ENCODE measurements at regions of chr4 and their contacts with region 1.

Region 1: DNA sequence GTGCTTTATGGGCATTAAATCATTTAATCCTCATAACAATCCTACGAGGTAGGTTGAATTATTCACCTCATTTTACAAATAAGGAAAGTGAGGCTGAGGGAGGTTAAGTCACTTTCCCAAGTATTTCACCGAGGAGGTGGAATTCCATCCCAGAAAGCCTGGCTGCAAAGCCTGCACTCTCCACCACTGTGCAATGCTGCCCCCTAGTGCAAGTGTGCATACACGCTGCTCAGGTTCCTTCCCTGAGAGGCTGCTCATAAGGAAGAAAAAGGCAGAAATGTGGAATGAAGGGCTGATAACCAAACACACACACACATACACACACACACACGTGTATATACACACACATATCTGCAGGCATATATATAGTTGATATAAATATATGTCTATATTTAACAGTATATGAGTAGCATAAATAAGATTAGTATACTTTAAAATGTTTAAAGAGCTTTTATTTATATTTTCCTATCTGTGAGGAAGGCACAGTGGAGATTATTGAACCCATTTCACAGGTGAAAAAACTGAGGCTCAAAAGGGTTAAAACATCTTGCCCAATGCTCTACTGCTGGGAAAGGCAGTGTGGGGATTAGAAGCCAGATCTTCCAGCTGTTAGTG is 714.5 kb upstream of the TENM3 start:
- DNase-seq: peak; percentile 8
- ATAC-seq: peak; percentile 86
- H3K4me3 ChIP-seq: no peak overlapping the region
- H3K27ac ChIP-seq: no peak overlapping the region
- H3K4me1 ChIP-seq: no peaks in the 10 kb centered on the region
- H3K27me3 ChIP-seq: no peaks in the 10 kb centered on the region
- CTCF ChIP-seq: peak; percentile 84 to 90 (median 86)
- EP300 ChIP-seq: no peak
- POLR2A ChIP-seq: no peak
- RAD21 ChIP-seq: peak; percentile 92

Region 2: DNA sequence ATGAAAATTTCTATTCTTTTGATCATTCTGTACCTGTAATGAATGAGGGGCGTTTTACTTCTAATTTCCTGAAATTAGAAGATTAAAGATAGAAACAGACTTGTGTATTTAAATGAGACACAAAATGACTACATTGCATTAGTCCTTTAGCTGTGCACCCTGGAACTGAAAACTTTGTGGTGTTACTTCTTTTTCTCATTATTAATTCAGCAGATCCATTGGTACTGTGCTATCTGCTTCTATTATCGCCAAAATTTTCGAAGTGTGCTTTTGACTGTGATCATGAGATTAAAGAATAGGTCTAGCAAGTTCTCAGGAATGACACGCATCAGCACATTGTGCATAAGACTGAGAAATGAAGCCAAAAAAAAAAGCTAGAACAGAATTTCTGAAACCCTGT is 1224.4 kb before region 1 on chr4:
- CTCF ChIA-PET with region 1: no interaction called
- POLR2A ChIA-PET with region 1: no interaction called
- RAD21 ChIA-PET with region 1: no interaction called
- SMC1A ChIA-PET with region 1: no interaction called
- in situ Hi-C with region 1: no loop called
- intact Hi-C with region 1: no loop called
- DNase-seq: no peak
- ATAC-seq: 0 out of 3 replicates have a peak, but pooled peaks have one; percentile 19
- H3K4me3 ChIP-seq: no peak overlapping the region
- H3K27ac ChIP-seq: no peak overlapping the region
- H3K4me1 ChIP-seq: no peaks in the 10 kb centered on the region
- H3K27me3 ChIP-seq: no peaks in the 10 kb centered on the region
- CTCF ChIP-seq: no peak
- EP300 ChIP-seq: no peak
- POLR2A ChIP-seq: no peak
- RAD21 ChIP-seq: no peak

Region 3: DNA sequence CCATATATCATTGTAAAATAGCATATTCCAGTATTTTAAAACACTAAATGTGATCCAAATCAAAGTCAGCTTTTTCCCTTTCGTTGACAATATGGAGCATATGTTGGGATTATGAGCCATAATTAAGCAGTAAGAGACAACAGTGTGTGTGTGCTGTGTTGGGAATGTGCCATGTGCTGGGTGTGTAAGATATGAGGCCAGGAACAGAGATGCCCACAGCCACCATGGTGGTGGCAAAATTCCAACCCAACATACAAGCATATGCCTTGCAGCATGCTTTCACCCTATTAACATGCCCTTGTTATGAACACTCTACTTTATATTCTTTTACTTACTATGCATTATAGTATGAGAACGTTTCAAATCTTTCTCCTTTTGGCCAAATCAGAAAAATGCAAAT is 845.9 kb before region 1 on chr4:
- CTCF ChIA-PET with region 1: no interaction called
- POLR2A ChIA-PET with region 1: no interaction called
- RAD21 ChIA-PET with region 1: no interaction called
- SMC1A ChIA-PET with region 1: no interaction called
- in situ Hi-C with region 1: no loop called
- intact Hi-C with region 1: no loop called
- DNase-seq: no peak
- ATAC-seq: no peak
- H3K4me3 ChIP-seq: no peak overlapping the region
- H3K27ac ChIP-seq: no peak overlapping the region
- H3K4me1 ChIP-seq: no peaks in the 10 kb centered on the region
- H3K27me3 ChIP-seq: no peaks in the 10 kb centered on the region
- CTCF ChIP-seq: no peak
- EP300 ChIP-seq: no peak
- POLR2A ChIP-seq: no peak
- RAD21 ChIP-seq: no peak

Region 4: DNA sequence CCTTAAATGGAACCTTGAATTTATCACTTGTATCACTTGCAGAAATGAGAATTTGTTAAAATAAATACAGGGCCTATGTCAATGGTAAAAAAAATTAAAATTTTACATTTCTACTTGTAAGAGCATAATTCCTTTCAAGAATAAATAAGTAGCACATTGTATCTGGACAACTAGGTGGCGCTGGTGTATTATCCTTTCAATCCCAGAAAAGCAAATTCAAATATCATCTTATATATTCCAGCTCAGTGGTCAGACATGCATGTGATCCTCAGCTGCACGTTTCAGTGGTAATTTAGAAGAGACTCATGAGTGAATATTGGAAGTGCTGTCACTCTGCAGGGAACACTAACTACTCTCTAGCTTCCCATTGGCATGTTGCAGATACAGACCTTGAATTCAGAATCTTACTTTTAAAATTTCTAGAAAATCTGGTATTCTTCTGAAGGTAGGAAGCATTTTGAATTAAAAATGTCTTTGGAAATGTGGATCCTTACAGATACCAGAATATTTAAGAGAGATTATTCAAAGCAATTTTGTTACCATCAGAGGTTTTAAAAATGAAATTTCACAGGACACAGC is 700.1 kb before region 1 on chr4:
- CTCF ChIA-PET with region 1: interaction called, 21 read pairs
- POLR2A ChIA-PET with region 1: no interaction called
- RAD21 ChIA-PET with region 1: interaction called, 3 read pairs
- SMC1A ChIA-PET with region 1: interaction called, 4 read pairs
- in situ Hi-C with region 1: no loop called
- intact Hi-C with region 1: loop called (anchors 1 kb)
- DNase-seq: no peak
- ATAC-seq: peak; percentile 51; the same call in 2 of the 3 replicates
- H3K4me3 ChIP-seq: no peak overlapping the region
- H3K27ac ChIP-seq: no peak overlapping the region
- H3K4me1 ChIP-seq: peaks cover 4% of the 10 kb centered on the region; the same call in 1 of the 2 replicates
- H3K27me3 ChIP-seq: no peaks in the 10 kb centered on the region
- CTCF ChIP-seq: peak; percentile 56 to 59 (median 58)
- EP300 ChIP-seq: no peak
- POLR2A ChIP-seq: no peak
- RAD21 ChIP-seq: peak; percentile 71

Region 5: DNA sequence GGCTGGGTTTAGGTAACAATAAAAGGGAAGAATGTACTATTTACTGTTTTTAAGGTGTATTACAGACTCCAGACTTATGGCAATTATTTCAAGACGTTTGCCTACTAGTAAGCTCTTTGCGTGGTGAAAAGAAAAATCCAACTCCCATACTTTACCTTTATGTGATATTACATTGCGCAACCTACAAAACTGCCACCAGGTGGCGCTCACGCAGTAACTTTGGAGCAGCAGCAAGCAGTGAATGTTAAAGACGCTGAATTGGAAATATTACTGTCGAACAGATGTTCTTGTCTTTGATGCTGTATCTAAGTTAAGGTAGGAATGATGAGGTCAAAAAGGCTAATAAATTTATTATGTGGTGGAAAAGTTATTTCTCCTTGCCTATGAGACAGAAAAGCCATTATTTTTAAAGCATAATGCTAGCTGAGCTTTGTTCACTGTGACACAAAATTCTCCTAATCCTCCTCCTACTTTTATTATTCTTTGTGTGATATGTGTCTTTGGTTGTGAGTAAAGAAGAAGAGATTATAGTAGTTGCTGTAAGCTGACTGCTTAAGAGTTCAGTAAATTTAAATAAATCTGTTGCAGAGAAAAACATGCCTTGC is 385.3 kb before region 1 on chr4:
- CTCF ChIA-PET with region 1: interaction called, 50 read pairs
- POLR2A ChIA-PET with region 1: no interaction called
- RAD21 ChIA-PET with region 1: interaction called, 22 read pairs
- SMC1A ChIA-PET with region 1: interaction called, 13 read pairs
- in situ Hi-C with region 1: loop called (anchors 5 kb)
- intact Hi-C with region 1: loop called (anchors 1 kb)
- DNase-seq: peak; percentile 5
- ATAC-seq: peak; percentile 90
- H3K4me3 ChIP-seq: no peak overlapping the region
- H3K27ac ChIP-seq: no peak overlapping the region
- H3K4me1 ChIP-seq: no peaks in the 10 kb centered on the region
- H3K27me3 ChIP-seq: no peaks in the 10 kb centered on the region; a peak in 1 of 4 replicates
- CTCF ChIP-seq: peak; percentile 81 to 84 (median 83)
- EP300 ChIP-seq: no peak
- POLR2A ChIP-seq: no peak
- RAD21 ChIP-seq: peak; percentile 95

Region 6: GRCh38 chr4:181301735-181302710 is 226.7 kb before region 1 on chr4:
- CTCF ChIA-PET with region 1: interaction called, 77 read pairs
- POLR2A ChIA-PET with region 1: no interaction called
- RAD21 ChIA-PET with region 1: interaction called, 8 read pairs
- SMC1A ChIA-PET with region 1: interaction called, 36 read pairs
- in situ Hi-C with region 1: loop called (anchors 5 kb)
- intact Hi-C with region 1: loop called (anchors 1 kb)
- DNase-seq: no peak
- ATAC-seq: peak; percentile 96
- H3K4me3 ChIP-seq: no peak overlapping the region
- H3K27ac ChIP-seq: no peak overlapping the region
- H3K4me1 ChIP-seq: no peaks in the 10 kb centered on the region
- H3K27me3 ChIP-seq: no peaks in the 10 kb centered on the region
- CTCF ChIP-seq: peak; percentile 62 to 74 (median 66)
- EP300 ChIP-seq: no peak
- POLR2A ChIP-seq: no peak
- RAD21 ChIP-seq: peak; percentile 58

Region 7: DNA sequence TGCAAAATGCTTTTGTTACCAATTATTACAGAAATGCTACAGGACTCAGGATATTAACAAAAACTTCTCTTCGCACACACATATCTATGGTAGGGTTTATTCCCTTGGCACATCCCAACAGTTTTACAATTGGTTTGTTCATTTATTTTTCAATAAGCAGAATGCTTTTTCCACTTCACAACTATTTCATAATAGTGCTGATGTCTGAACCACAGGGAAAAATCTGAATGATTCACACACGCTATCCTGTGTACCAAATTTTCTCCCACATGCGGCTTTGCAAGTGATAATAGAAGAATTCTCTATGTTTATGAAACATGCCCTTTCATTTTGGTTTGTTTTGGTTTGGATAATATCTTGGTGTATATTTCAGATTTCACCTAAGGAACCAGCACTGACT is 11.2 kb before region 1 on chr4:
- CTCF ChIA-PET with region 1: interaction called, 10 read pairs
- POLR2A ChIA-PET with region 1: no interaction called
- RAD21 ChIA-PET with region 1: no interaction called
- SMC1A ChIA-PET with region 1: interaction called, 4 read pairs
- in situ Hi-C with region 1: no loop called
- intact Hi-C with region 1: no loop called
- DNase-seq: no peak
- ATAC-seq: no peak
- H3K4me3 ChIP-seq: no peak overlapping the region
- H3K27ac ChIP-seq: no peak overlapping the region
- H3K4me1 ChIP-seq: no peaks in the 10 kb centered on the region
- H3K27me3 ChIP-seq: no peaks in the 10 kb centered on the region
- CTCF ChIP-seq: no peak
- EP300 ChIP-seq: no peak
- POLR2A ChIP-seq: no peak
- RAD21 ChIP-seq: no peak

Measured in GM12878 (cell line).